H1 (cell line): ENCODE measurements at regions of chr2 and their contacts with region 1.

Region 1: GRCh38 chr2:101151141-101151858 is at the start of gene TBC1D8:
- DNase-seq: peak in 1 of 2 experiments; percentile 89
- H3K4me3 ChIP-seq: peak within 1 kb of the TSS; percentile 62 to 81 (median 72)
- H3K27ac ChIP-seq: no peak within 1 kb of the TSS
- H3K4me1 ChIP-seq: peaks cover 6 to 12% (median 9%) of the 10 kb centered on the region in 4 experiments
- H3K27me3 ChIP-seq: peaks cover 0 to 8% (median 2%) of the 10 kb centered on the region in 4 experiments; a peak in 4 of 7 replicates
- CTCF ChIP-seq: no peak
- EP300 ChIP-seq: no peak
- POLR2A ChIP-seq: peak in 1 of 2 experiments; percentile 42; a peak in 1 of 3 replicates
- RAD21 ChIP-seq: no peak
- total RNA-seq, gene TBC1D8: 21.8 and 24.0 TPM in 2 replicates

Region 2: DNA sequence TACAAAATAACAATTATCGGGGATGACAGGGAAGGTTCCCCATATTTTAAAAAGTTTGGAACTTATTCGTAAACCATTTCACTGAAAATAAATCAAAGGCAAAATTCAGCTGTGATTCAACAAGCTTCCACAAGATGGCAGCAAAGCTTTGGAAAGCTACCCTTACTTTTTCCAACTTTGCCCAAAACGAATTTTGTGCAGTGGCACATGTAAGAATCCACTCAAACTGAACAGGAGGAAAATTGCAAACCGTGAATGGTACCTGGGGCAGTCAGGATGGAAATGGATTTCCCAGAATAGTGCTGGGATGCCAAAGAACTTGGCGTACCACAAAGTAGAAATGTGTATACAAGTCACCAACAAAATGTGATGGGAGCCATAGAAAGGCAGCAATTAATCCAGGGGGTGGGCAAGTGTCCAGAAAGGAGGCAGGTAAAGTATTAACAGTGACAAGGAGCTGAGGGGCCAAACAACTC is 138.6 kb before region 1 on chr2:
- CTCF ChIA-PET with region 1: interaction called, 19 read pairs
- POLR2A ChIA-PET with region 1: interaction called, 151 read pairs
- DNase-seq: peak in 1 of 2 experiments; percentile 60
- H3K4me3 ChIP-seq: no peak overlapping the region
- H3K27ac ChIP-seq: no peak overlapping the region
- H3K4me1 ChIP-seq: no peaks in the 10 kb centered on the region; a peak in 1 of 7 replicates
- H3K27me3 ChIP-seq: no peaks in the 10 kb centered on the region
- CTCF ChIP-seq: peak in 2 of 3 experiments; percentile 55 to 77; a peak in 3 of 4 replicates
- EP300 ChIP-seq: no peak
- POLR2A ChIP-seq: no peak
- RAD21 ChIP-seq: peak; percentile 84 to 89

Region 3: DNA sequence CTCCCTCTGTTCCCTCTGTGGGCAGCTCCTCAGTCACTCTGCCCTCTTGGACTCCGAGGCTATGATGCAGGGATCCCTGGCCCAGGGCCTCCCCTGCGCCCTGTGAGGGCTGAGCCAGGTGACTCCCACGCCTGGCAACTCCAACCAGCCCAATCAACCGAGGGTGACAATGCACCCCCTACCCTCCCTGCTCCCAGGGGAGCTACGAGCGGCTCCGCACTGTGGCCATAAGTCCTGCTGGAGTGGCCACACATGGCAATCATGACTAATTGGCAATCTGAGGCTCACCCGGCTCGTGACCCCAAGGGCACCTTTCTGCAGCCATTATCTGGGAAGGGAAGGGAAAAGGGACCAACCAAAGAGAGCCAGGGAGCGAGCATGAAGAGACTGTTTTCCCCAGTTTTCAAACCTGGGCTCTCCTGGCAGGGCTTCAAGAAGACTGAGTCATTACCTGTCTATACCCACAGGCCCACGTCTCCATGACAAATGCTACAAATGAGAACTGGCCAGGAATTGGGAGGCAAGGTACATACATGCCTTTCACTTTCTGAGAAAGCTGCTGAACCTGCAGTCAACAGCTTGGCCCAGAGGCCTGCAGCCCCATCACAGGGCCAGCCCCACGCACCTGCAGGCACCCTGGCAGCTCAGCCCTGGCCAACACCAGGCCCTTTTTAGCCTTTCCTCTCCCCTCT is 104.1 kb before region 1 on chr2:
- CTCF ChIA-PET with region 1: interaction called, 17 read pairs
- POLR2A ChIA-PET with region 1: interaction called, 4 read pairs
- DNase-seq: no peak
- H3K4me3 ChIP-seq: no peak overlapping the region
- H3K27ac ChIP-seq: no peak overlapping the region
- H3K4me1 ChIP-seq: peaks cover 0 to 7% (median 1%) of the 10 kb centered on the region in 4 experiments; a peak in 4 of 7 replicates
- H3K27me3 ChIP-seq: no peaks in the 10 kb centered on the region
- CTCF ChIP-seq: no peak
- EP300 ChIP-seq: no peak
- POLR2A ChIP-seq: no peak
- RAD21 ChIP-seq: no peak

Region 4: GRCh38 chr2:101140978-101141657 is 10.2 kb before region 1 on chr2:
- CTCF ChIA-PET with region 1: interaction called, 11 read pairs
- POLR2A ChIA-PET with region 1: interaction called, 18 read pairs
- DNase-seq: no peak
- H3K4me3 ChIP-seq: no peak overlapping the region
- H3K27ac ChIP-seq: no peak overlapping the region
- H3K4me1 ChIP-seq: peaks cover 3 to 11% (median 6%) of the 10 kb centered on the region in 4 experiments
- H3K27me3 ChIP-seq: no peaks in the 10 kb centered on the region
- CTCF ChIP-seq: no peak
- EP300 ChIP-seq: no peak
- POLR2A ChIP-seq: no peak
- RAD21 ChIP-seq: no peak